ENCODE measurements at regions of chr19 and their contacts with region 1.

Region 1: GRCh38 chr19:16283210-16284061 is 41.2 kb upstream of the KLF2 start:
- DNase-seq: peak; percentile 80 to 93 (median 90)
- H3K4me3 ChIP-seq: peak overlapping the region in 5 of 7 experiments; percentile 32 to 62 (median 55)
- H3K27ac ChIP-seq: peak overlapping the region; percentile 75 to 91
- H3K4me1 ChIP-seq: peaks cover 0 to 48% (median 41%) of the 10 kb centered on the region in 4 experiments
- H3K27me3 ChIP-seq: no peaks in the 10 kb centered on the region

Region 2: GRCh38 chr19:16235811-16236652 is 47.4 kb before region 1 on chr19:
- CTCF ChIA-PET with region 1: no interaction called
- POLR2A ChIA-PET with region 1: no interaction called
- DNase-seq: no peak
- H3K4me3 ChIP-seq: no peak overlapping the region
- H3K27ac ChIP-seq: peak overlapping the region in 1 of 2 experiments; percentile 34
- H3K4me1 ChIP-seq: peaks cover 3 to 27% (median 17%) of the 10 kb centered on the region in 4 experiments
- H3K27me3 ChIP-seq: no peaks in the 10 kb centered on the region

Region 3: DNA sequence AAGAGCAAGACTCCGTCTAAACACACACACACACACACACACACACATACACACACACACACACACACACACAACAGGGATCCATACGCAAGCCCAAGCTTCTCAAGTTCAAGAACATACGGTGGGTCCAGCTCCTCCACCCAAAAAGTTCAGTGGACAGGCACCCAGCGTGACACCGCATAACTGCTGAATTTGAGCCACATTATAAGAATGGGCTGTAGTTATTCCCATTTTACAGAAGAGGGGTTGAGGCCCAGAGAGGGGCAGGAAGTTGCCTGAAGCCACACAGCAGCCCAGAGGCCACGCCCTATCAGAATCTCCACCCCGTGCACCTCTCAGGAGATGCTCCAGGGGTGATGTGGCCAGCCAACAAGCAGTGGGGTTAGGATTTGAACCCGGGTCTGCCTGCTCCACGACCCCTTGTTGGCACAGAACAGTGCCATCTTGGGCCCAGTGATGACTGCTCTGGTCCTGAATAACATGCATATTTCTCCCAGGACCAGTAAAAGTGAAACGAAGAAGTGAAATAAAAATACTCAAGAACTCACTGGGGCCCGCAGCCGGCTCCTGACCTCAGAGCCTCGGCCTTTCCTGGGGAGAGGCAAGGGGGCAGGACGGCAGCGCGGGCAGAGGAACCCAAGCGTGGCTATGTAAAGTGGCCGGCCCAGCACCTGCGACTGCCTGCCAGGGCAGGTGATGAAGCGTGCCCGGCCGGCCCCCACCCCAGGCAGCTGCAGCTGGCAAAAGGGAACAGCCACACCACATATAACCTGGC is 23.9 kb before region 1 on chr19:
- CTCF ChIA-PET with region 1: interaction called, 6 read pairs
- POLR2A ChIA-PET with region 1: interaction called, 16 read pairs
- DNase-seq: peak in 1 of 3 donors; percentile 56
- H3K4me3 ChIP-seq: no peak overlapping the region
- H3K27ac ChIP-seq: no peak overlapping the region
- H3K4me1 ChIP-seq: peaks cover 2 to 56% (median 46%) of the 10 kb centered on the region in 4 experiments
- H3K27me3 ChIP-seq: no peaks in the 10 kb centered on the region

Region 4: DNA sequence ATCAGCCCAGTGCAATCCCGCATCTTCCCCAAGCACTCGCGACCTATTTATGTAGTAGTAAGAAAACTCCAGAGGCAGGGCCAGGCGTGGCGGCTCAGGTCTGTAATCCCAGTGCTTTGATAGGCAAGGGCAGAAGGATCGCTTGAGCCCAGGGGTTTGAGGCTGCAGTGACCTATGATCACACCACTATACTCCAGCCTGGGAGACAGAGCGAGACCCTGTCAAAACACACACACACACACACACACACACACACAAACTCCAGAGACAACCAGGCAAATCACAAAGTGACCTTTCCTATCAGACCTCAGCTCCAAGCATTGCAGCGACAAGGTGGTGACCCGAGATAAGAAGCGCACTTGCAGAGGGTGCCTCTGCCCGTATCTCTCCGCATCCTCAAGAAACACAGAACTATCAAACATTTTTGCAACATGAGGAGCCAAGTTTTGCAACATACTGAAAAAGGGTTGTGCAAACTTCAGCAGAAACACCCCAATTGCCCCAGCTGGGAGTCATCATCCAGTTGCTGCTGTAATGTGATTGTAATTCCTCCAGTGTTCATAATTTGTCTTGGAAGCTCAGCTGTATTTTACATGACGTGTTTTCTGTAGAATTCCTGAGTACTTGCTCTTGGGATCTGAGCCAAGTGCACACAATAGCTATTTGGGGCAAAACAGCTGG is 32.5 kb after region 1 on chr19:
- CTCF ChIA-PET with region 1: interaction called, 5 read pairs
- POLR2A ChIA-PET with region 1: interaction called, 17 read pairs
- DNase-seq: peak; percentile 70 to 86 (median 75)
- H3K4me3 ChIP-seq: peak overlapping the region in 1 of 7 experiments; percentile 13
- H3K27ac ChIP-seq: no peak overlapping the region
- H3K4me1 ChIP-seq: peaks cover 3 to 11% (median 10%) of the 10 kb centered on the region in 4 experiments
- H3K27me3 ChIP-seq: peaks cover 0 to 5% (median 1%) of the 10 kb centered on the region in 5 experiments

Region 5: DNA sequence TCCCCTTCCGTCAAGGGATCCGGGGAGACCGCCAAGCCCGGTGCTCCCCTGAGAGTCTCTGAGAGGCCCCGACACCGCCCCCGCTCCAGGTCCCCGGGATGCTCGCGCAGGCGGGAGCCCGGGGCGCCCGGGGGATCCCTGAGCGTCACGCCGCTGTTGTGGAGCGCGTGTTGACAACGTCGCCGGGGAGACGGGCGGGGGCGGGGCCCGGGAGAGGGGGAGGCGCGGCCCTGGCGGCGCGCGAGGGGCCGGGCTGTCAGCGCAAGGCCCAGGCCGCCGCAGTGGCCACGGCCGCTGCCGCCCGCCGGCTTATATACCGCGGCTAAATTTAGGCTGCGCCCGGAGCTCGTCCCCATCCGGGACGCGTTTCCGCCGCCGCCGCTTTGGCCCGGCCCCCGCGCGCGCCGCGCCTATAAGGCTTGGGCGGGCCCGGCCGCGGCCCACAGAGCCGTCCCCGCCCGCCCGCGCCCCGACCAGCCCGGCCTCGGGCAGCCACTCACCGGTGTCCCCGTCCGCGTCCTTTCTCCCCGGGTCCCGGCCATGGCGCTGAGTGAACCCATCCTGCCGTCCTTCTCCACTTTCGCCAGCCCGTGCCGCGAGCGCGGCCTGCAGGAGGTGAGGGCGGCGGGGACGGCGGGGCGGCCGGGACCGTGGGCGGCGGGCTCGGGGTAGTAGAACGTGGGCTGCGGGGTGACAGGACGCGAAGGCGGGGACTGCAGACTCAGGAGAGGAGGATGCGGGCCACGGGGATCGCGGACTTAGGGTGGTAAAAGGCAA is 41.1 kb after region 1 on chr19 and contains the start of gene KLF2:
- CTCF ChIA-PET with region 1: no interaction called
- POLR2A ChIA-PET with region 1: interaction called, 29 read pairs
- DNase-seq: peak; percentile 90 to 96 (median 96)
- H3K4me3 ChIP-seq: peak within 1 kb of the TSS; percentile 46 to 81 (median 69)
- H3K27ac ChIP-seq: peak within 1 kb of the TSS in 1 of 2 experiments; percentile 76
- H3K4me1 ChIP-seq: peaks cover 13 to 58% (median 55%) of the 10 kb centered on the region in 4 experiments
- H3K27me3 ChIP-seq: peaks cover 0 to 45% (median 13%) of the 10 kb centered on the region in 5 experiments

Measured in common myeloid progenitor, CD34-positive (primary cell).